Sciatic nerve (tissue), 2 donors: ENCODE measurements at regions of chr3 and their contacts with region 1.

Region 1: DNA sequence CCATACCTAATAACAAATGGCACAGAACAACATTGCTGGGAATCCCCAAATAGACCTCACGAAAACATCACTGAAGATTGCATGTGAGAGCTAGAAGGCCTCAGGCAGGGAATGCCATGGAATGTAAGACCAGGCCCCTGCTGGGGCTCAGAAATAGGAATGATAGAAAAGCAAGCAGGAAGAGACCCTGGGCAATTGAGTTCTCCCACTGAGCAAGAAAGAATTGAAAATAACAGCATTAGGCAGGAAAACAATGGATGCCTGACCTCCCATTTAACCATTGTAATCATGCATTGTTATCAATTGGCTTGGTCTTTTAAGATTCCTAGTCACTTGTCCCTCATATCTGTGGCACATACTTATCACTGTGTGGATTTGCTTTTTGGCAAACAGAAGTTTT is 581.6 kb downstream of the FHIT start:
- DNase-seq: no peak
- ATAC-seq: no peak

Region 2: GRCh38 chr3:60325610-60326170 is 343.9 kb before region 1 on chr3:
- intact Hi-C with region 1: loop called (anchors 5 kb)
- DNase-seq: no peak
- ATAC-seq: no peak

Region 3: GRCh38 chr3:60890226-60890625 is 220.6 kb after region 1 on chr3:
- intact Hi-C with region 1: no loop called
- DNase-seq: no peak
- ATAC-seq: no peak

Region 4: DNA sequence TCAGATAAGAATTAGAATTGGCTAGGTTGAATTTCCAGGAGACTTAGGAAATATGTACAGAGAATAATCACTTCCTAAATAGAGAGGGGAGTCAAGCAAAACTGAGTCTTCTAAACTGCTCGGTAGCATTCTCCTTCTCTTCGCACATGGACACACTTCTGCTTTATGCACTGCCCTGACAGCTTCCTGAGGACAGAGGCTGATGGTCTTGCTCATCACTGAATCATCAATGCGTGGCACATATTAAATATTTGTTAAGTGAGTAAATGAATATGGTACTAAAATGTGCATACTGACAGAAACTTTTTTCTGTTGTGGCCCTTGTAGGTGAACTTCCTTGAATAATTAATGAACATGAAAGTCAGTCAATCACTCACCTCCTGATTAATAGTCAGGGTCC is 266.1 kb after region 1 on chr3:
- intact Hi-C with region 1: no loop called
- DNase-seq: no peak
- ATAC-seq: no peak